HCT116 (cell line): ENCODE measurements at regions of chr3 and their contacts with region 1.

Region 1: GRCh38 chr3:149487598-149488197 is 13.2 kb downstream of the TM4SF4 start:
- DNase-seq: peak; percentile 61
- ATAC-seq: peak; percentile 84
- H3K4me3 ChIP-seq: no peak overlapping the region
- H3K27ac ChIP-seq: no peak overlapping the region
- H3K4me1 ChIP-seq: peaks cover 0 to 9% of the 10 kb centered on the region in 2 experiments; a peak in 1 of 4 replicates
- H3K27me3 ChIP-seq: no peaks in the 10 kb centered on the region
- CTCF ChIP-seq: peak; percentile 9 to 86 (median 86); a peak in 5 of 6 replicates
- POLR2A ChIP-seq: no peak
- RAD21 ChIP-seq: no peak

Region 2: GRCh38 chr3:149352556-149352955 is 135.1 kb before region 1 on chr3:
- CTCF ChIA-PET with region 1: no interaction called
- POLR2A ChIA-PET with region 1: no interaction called
- RAD21 ChIA-PET with region 1: no interaction called
- intact Hi-C with region 1: loop called (anchors 2 kb)
- DNase-seq: peak; percentile 75
- ATAC-seq: peak; percentile 99
- H3K4me3 ChIP-seq: no peak overlapping the region
- H3K27ac ChIP-seq: no peak overlapping the region
- H3K4me1 ChIP-seq: peaks cover 3 to 8% of the 10 kb centered on the region in 2 experiments; a peak in 3 of 4 replicates
- H3K27me3 ChIP-seq: no peaks in the 10 kb centered on the region
- CTCF ChIP-seq: peak; percentile 79 to 86 (median 84)
- POLR2A ChIP-seq: no peak
- RAD21 ChIP-seq: peak; percentile 88

Region 3: DNA sequence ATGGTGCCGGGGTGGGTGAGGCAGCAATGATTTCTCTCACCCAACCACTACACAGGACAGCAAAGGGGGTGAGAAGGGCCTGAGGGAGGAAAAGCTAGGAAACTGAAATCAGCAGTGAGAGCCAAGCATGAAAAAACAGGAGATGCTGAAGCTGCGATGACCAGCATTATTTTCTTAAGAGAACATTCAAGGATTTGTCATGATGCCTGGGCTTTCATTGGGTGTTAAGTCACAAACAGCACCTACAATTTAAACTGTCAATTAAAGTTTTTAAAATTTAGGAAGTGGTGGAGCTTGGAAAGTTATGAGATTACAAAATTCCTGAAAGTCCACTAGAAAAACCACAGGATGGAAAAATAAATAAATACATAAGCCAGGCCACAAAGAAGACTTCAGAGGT is 25.0 kb before region 1 on chr3:
- CTCF ChIA-PET with region 1: no interaction called
- POLR2A ChIA-PET with region 1: no interaction called
- RAD21 ChIA-PET with region 1: no interaction called
- intact Hi-C with region 1: no loop called
- DNase-seq: no peak
- ATAC-seq: no peak
- H3K4me3 ChIP-seq: no peak overlapping the region
- H3K27ac ChIP-seq: no peak overlapping the region
- H3K4me1 ChIP-seq: peaks cover 0 to 5% of the 10 kb centered on the region in 2 experiments; a peak in 1 of 4 replicates
- H3K27me3 ChIP-seq: no peaks in the 10 kb centered on the region
- CTCF ChIP-seq: no peak
- POLR2A ChIP-seq: no peak
- RAD21 ChIP-seq: no peak